ENCODE measurements at regions of chr1 and their contacts with region 1.

Region 1: GRCh38 chr1:15949453-15950245 is 26.3 kb downstream of the ZBTB17 start:
- DNase-seq: peak; percentile 91 to 96 (median 95)
- ATAC-seq: peak; percentile 81
- H3K4me3 ChIP-seq: peak overlapping the region; percentile 4; the same call in 1 of the 2 replicates
- H3K27ac ChIP-seq: peak overlapping the region; percentile 97
- H3K4me1 ChIP-seq: peaks cover 60 to 63% of the 10 kb centered on the region in 2 experiments
- H3K27me3 ChIP-seq: no peaks in the 10 kb centered on the region
- CTCF ChIP-seq: no peak
- EP300 ChIP-seq: peak; percentile 45; the same call in 1 of the 2 replicates
- POLR2A ChIP-seq: 0 out of 2 replicates have a peak, but pooled peaks have one; percentile 26
- RAD21 ChIP-seq: no peak

Region 2: GRCh38 chr1:15627343-15627988 is 322.2 kb before region 1 on chr1:
- CTCF ChIA-PET with region 1: no interaction called
- POLR2A ChIA-PET with region 1: no interaction called
- in situ Hi-C with region 1: no loop called
- intact Hi-C with region 1: no loop called
- DNase-seq: peak in 2 of 4 experiments; percentile 34 to 53
- ATAC-seq: peak; percentile 72
- H3K4me3 ChIP-seq: no peak overlapping the region
- H3K27ac ChIP-seq: peak overlapping the region; percentile 74
- H3K4me1 ChIP-seq: peaks cover 12 to 48% of the 10 kb centered on the region in 2 experiments
- H3K27me3 ChIP-seq: no peaks in the 10 kb centered on the region
- CTCF ChIP-seq: no peak
- EP300 ChIP-seq: no peak
- POLR2A ChIP-seq: no peak
- RAD21 ChIP-seq: no peak

Region 3: GRCh38 chr1:15788624-15789301 is 160.9 kb before region 1 on chr1:
- CTCF ChIA-PET with region 1: interaction called, 3 read pairs
- POLR2A ChIA-PET with region 1: interaction called, 6 read pairs
- in situ Hi-C with region 1: no loop called
- intact Hi-C with region 1: loop called (anchors 1 kb)
- DNase-seq: peak in 2 of 4 experiments; percentile 22 to 60
- ATAC-seq: peak; percentile 11; the same call in 1 of the 3 replicates
- H3K4me3 ChIP-seq: no peak overlapping the region
- H3K27ac ChIP-seq: peak overlapping the region; percentile 31; the same call in 1 of the 3 replicates
- H3K4me1 ChIP-seq: peaks cover 11 to 19% of the 10 kb centered on the region in 2 experiments; a peak in 4 of 5 replicates
- H3K27me3 ChIP-seq: peaks cover 0 to 8% of the 10 kb centered on the region in 2 experiments; a peak in 2 of 5 replicates
- CTCF ChIP-seq: no peak
- EP300 ChIP-seq: no peak
- POLR2A ChIP-seq: no peak
- RAD21 ChIP-seq: no peak

Region 4: GRCh38 chr1:15803354-15803753 is 146.3 kb before region 1 on chr1:
- CTCF ChIA-PET with region 1: interaction called, 6 read pairs
- POLR2A ChIA-PET with region 1: interaction called, 3 read pairs
- in situ Hi-C with region 1: no loop called
- intact Hi-C with region 1: loop called (anchors 2 kb)
- DNase-seq: peak; percentile 32 to 63 (median 44)
- ATAC-seq: peak; percentile 70
- H3K4me3 ChIP-seq: no peak overlapping the region
- H3K27ac ChIP-seq: no peak overlapping the region
- H3K4me1 ChIP-seq: peaks cover 24 to 25% of the 10 kb centered on the region in 2 experiments
- H3K27me3 ChIP-seq: no peaks in the 10 kb centered on the region
- CTCF ChIP-seq: peak; percentile 59 to 70 (median 67)
- EP300 ChIP-seq: no peak
- POLR2A ChIP-seq: no peak
- RAD21 ChIP-seq: peak; percentile 12 to 66; a peak in 2 of 4 replicates

Region 5: DNA sequence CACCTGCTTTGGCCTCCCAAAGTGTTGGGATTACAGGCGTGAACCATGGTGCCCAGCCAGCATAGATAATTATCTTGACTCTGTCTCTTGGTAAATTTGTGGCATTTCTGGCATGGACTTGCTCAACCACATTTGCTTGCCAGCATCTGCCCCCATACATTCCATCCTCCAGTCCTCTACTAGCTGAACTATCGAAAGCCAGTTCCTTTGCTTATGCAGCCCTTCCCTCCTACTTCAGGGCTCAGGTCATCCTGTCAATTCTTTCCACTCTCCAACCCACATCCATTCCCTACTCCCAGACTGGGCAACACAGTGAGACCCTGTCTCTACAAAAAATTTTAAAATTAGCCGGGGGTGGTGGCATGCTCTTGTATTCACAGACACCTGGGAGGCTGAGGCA is 129.2 kb before region 1 on chr1:
- CTCF ChIA-PET with region 1: interaction called, 3 read pairs
- POLR2A ChIA-PET with region 1: interaction called, 3 read pairs
- in situ Hi-C with region 1: no loop called
- intact Hi-C with region 1: loop called (anchors 1 kb)
- DNase-seq: no peak
- ATAC-seq: no peak
- H3K4me3 ChIP-seq: no peak overlapping the region
- H3K27ac ChIP-seq: no peak overlapping the region
- H3K4me1 ChIP-seq: no peaks in the 10 kb centered on the region; a peak in 3 of 5 replicates
- H3K27me3 ChIP-seq: no peaks in the 10 kb centered on the region
- CTCF ChIP-seq: no peak
- EP300 ChIP-seq: no peak
- POLR2A ChIP-seq: no peak
- RAD21 ChIP-seq: no peak

Region 6: GRCh38 chr1:15885701-15886610 is 63.7 kb before region 1 on chr1:
- CTCF ChIA-PET with region 1: no interaction called
- POLR2A ChIA-PET with region 1: no interaction called
- in situ Hi-C with region 1: no loop called
- intact Hi-C with region 1: loop called (anchors 5 kb)
- DNase-seq: peak; percentile 85 to 97 (median 91)
- ATAC-seq: peak; percentile 97
- H3K4me3 ChIP-seq: peak overlapping the region; percentile 24
- H3K27ac ChIP-seq: peak overlapping the region; percentile 85
- H3K4me1 ChIP-seq: peaks cover 14 to 23% of the 10 kb centered on the region in 2 experiments; a peak in 4 of 5 replicates
- H3K27me3 ChIP-seq: no peaks in the 10 kb centered on the region
- CTCF ChIP-seq: peak in 2 of 3 experiments; percentile 4 to 36; a peak in 3 of 6 replicates
- EP300 ChIP-seq: peak; percentile 84
- POLR2A ChIP-seq: peak; percentile 70
- RAD21 ChIP-seq: 0 out of 4 replicates have a peak, but pooled peaks of 1 of the 2 experiments have one; percentile 6

Region 7: GRCh38 chr1:15937706-15938168 is 11.9 kb before region 1 on chr1:
- CTCF ChIA-PET with region 1: no interaction called
- POLR2A ChIA-PET with region 1: interaction called, 20 read pairs
- in situ Hi-C with region 1: no loop called
- intact Hi-C with region 1: no loop called
- DNase-seq: peak in 1 of 4 experiments; percentile 18
- ATAC-seq: peak; percentile 11
- H3K4me3 ChIP-seq: no peak overlapping the region
- H3K27ac ChIP-seq: peak overlapping the region; percentile 37; the same call in 1 of the 3 replicates
- H3K4me1 ChIP-seq: peaks cover 0 to 21% of the 10 kb centered on the region in 2 experiments; a peak in 1 of 5 replicates
- H3K27me3 ChIP-seq: no peaks in the 10 kb centered on the region
- CTCF ChIP-seq: peak in 1 of 3 experiments; percentile 25; a peak in 1 of 6 replicates
- EP300 ChIP-seq: no peak
- POLR2A ChIP-seq: peak; percentile 38; the same call in 1 of the 2 replicates
- RAD21 ChIP-seq: peak in 1 of 2 experiments; percentile 25; a peak in 1 of 4 replicates

Region 8: GRCh38 chr1:15994590-15995351 is 45.1 kb after region 1 on chr1:
- CTCF ChIA-PET with region 1: no interaction called
- POLR2A ChIA-PET with region 1: interaction called, 3 read pairs
- in situ Hi-C with region 1: no loop called
- intact Hi-C with region 1: loop called (anchors 5 kb)
- DNase-seq: peak; percentile 65 to 77 (median 72)
- ATAC-seq: peak; percentile 95
- H3K4me3 ChIP-seq: no peak overlapping the region
- H3K27ac ChIP-seq: no peak overlapping the region
- H3K4me1 ChIP-seq: peaks cover 0 to 29% of the 10 kb centered on the region in 2 experiments; a peak in 2 of 5 replicates
- H3K27me3 ChIP-seq: peaks cover 13 to 28% of the 10 kb centered on the region in 2 experiments; a peak in 3 of 5 replicates
- CTCF ChIP-seq: peak; percentile 89 to 96 (median 93)
- EP300 ChIP-seq: no peak
- POLR2A ChIP-seq: no peak
- RAD21 ChIP-seq: peak; percentile 75 to 96

Measured in K562 (cell line).